MCF 10A (cell line): ENCODE measurements at regions of chr12 and their contacts with region 1.

Region 1: GRCh38 chr12:46661110-46661845 is 164.5 kb downstream of the SLC38A4 start:
- DNase-seq: peak; percentile 79
- H3K4me3 Mint-ChIP-seq: no peak overlapping the region
- H3K27ac Mint-ChIP-seq: peak overlapping the region; percentile 80
- H3K4me1 Mint-ChIP-seq: peaks cover 63% of the 10 kb centered on the region
- H3K27me3 Mint-ChIP-seq: no peaks in the 10 kb centered on the region
- CTCF ChIP-seq: peak; percentile 57

Region 2: DNA sequence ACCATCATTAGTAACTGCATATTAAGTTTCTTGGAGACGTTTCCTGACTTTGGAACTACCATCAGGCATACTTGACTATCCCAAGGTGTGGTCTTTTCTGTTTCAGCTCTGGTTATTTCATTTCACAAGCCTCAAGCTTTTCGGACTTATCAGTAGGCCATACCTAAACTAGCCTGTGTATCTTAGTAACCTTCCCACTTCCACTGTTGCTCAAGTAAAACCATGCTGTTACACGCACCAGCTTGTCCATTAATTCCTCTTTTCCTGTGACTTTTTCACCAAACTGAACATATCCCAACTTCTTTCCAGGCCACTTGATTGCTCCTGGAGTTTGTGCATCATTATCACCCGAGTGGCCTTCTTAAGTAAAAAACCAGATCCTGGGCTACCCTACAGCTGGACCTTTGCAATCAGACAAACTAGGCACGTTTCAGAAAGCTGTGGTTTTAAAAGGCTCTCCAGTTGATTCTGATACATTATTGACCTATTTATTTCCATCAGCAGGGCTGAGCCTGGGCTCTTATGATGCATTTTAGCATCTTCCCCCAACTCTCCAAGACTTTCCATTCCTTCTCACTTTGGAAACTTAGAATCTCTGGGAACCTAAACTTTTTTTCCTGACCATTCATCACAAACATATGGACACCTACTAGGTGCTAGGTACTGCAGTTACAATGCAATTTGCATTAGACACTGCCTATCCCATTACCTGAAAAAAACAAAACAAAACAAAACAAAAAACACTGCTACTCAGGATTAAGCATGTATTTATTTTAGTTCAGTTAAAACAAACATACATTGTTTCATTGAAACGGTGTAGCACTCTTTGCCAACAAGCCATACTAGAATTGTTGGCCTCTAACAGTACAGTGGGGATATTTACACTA is 303.6 kb before region 1 on chr12:
- CTCF ChIA-PET with region 1: interaction called, 6 read pairs
- POLR2A ChIA-PET with region 1: interaction called, 497 read pairs
- intact Hi-C with region 1: no loop called
- DNase-seq: peak; percentile 72
- H3K4me3 Mint-ChIP-seq: no peak overlapping the region
- H3K27ac Mint-ChIP-seq: peak overlapping the region; percentile 7
- H3K4me1 Mint-ChIP-seq: peaks cover 18% of the 10 kb centered on the region
- H3K27me3 Mint-ChIP-seq: no peaks in the 10 kb centered on the region
- CTCF ChIP-seq: no peak

Region 3: DNA sequence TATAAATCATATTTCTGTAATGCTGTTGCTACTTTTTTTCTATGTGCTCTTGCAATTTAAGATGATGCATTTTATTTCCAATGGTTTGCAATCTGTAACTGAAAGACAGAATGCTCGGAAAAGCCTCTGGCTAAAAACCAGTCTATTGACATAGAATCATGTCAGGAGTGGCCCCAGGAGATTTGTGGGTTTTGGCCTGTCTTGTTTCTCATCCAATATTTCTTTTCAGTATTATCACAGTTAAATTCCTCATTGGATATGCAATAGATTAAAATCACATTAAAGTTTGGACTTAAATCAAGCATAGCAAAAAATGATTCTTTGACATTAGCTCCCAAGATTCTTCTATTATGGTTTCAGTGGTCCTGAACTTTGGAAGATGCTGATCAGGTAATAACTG is 269.6 kb before region 1 on chr12:
- CTCF ChIA-PET with region 1: no interaction called
- POLR2A ChIA-PET with region 1: interaction called, 68 read pairs
- intact Hi-C with region 1: no loop called
- DNase-seq: no peak
- H3K4me3 Mint-ChIP-seq: no peak overlapping the region
- H3K27ac Mint-ChIP-seq: no peak overlapping the region
- H3K4me1 Mint-ChIP-seq: peaks cover 45% of the 10 kb centered on the region
- H3K27me3 Mint-ChIP-seq: no peaks in the 10 kb centered on the region
- CTCF ChIP-seq: no peak

Region 4: GRCh38 chr12:46702581-46703344 is 41.5 kb after region 1 on chr12:
- CTCF ChIA-PET with region 1: no interaction called
- POLR2A ChIA-PET with region 1: interaction called, 12 read pairs
- intact Hi-C with region 1: no loop called
- DNase-seq: peak; percentile 94
- H3K4me3 Mint-ChIP-seq: peak overlapping the region; percentile 64
- H3K27ac Mint-ChIP-seq: peak overlapping the region; percentile 93
- H3K4me1 Mint-ChIP-seq: peaks cover 30% of the 10 kb centered on the region
- H3K27me3 Mint-ChIP-seq: no peaks in the 10 kb centered on the region
- CTCF ChIP-seq: no peak